ENCODE measurements at regions of chr2 and their contacts with region 1.

Region 1: DNA sequence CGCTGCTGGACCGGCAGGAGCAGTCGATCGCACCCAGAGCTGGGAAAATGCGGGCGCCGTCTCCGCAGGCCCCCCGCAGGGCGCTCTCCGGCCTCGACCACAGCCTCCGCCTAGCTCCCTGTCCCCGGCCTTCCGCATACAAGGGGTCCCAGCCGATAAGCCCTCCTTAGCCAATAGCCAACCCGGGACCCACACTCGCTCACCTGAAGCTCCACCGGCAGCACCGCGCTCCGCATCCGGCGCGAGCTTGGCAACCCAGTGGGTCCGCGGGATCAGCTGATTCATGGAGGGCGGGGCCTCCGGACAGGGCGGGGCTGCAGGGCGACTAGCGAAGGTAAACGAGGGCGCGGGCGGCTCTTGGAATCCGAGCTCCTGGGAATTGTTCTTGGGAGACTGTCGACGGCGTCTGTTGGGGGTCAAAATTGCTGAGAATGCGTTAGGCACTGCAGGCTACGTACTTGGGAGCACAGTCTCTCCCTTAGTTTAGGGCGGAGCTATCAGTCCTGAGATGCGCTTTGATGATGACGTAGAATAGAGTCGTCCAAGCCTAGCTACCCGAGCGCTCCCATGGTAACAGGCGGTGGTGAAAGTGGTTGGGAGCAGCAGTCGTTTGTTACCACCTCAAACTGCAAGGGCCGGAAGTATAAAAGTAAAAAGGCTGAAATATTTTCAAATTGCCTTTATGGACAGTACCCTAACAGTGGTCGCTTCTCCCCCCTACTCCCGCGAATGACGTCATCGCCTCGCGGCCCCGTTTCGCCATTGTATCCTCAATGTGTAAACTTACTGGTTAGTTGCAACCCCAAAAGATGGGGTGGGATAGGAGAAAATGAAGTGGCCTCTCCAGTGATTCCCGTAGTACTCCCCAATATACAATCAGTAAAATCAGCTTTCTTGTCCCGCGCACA is at the start of gene ALS2:
- DNase-seq: peak; percentile 97
- H3K4me3 ChIP-seq: peak within 1 kb of the TSS; percentile 80
- H3K27ac ChIP-seq: peak within 1 kb of the TSS; percentile 51
- H3K4me1 ChIP-seq: peaks cover 28% of the 10 kb centered on the region
- H3K27me3 ChIP-seq: no peaks in the 10 kb centered on the region
- CTCF ChIP-seq: no peak
- total RNA-seq, gene ALS2: 27.2 and 27.6 TPM in 2 replicates

Region 2: GRCh38 chr2:201680743-201681142 is 100.2 kb before region 1 on chr2:
- CTCF ChIA-PET with region 1: no interaction called
- POLR2A ChIA-PET with region 1: no interaction called
- intact Hi-C with region 1: no loop called
- DNase-seq: peak in 1 of 2 experiments; percentile 9
- H3K4me3 ChIP-seq: no peak overlapping the region
- H3K27ac ChIP-seq: no peak overlapping the region
- H3K4me1 ChIP-seq: no peaks in the 10 kb centered on the region
- H3K27me3 ChIP-seq: no peaks in the 10 kb centered on the region
- CTCF ChIP-seq: peak; percentile 53

Region 3: GRCh38 chr2:202290970-202291369 is 510.0 kb after region 1 on chr2:
- CTCF ChIA-PET with region 1: no interaction called
- POLR2A ChIA-PET with region 1: no interaction called
- intact Hi-C with region 1: no loop called
- DNase-seq: no peak
- H3K4me3 ChIP-seq: no peak overlapping the region
- H3K27ac ChIP-seq: no peak overlapping the region
- H3K4me1 ChIP-seq: no peaks in the 10 kb centered on the region
- H3K27me3 ChIP-seq: no peaks in the 10 kb centered on the region
- CTCF ChIP-seq: no peak

Region 4: DNA sequence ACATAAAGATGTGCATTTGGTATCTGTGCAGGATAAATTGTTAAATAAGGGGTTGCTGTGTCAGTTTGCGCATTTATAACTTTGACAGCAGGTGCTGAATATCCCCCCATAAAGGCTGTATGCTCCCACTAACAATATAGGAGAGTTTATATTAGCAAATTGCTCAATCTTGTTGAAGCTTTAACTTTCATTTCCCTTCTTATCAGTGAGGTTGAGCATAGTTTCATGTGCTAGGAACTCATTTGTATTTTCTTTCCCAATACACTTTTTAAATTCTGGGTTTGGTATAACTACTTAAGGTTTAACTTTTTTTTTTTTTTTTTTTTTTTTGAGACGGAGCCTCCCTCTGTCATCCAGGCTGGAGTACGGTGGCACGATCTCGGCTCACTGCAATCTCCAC is 942.8 kb after region 1 on chr2:
- CTCF ChIA-PET with region 1: no interaction called
- POLR2A ChIA-PET with region 1: interaction called, 11 read pairs
- intact Hi-C with region 1: no loop called
- DNase-seq: no peak
- H3K4me3 ChIP-seq: no peak overlapping the region
- H3K27ac ChIP-seq: no peak overlapping the region
- H3K4me1 ChIP-seq: no peaks in the 10 kb centered on the region
- H3K27me3 ChIP-seq: no peaks in the 10 kb centered on the region
- CTCF ChIP-seq: no peak

Measured in PC-9 (cell line).